Right ventricle myocardium inferior (tissue), 1 donor: ENCODE measurements at regions of chr4 and their contacts with region 1.

Region 1: GRCh38 chr4:155512817-155513216 is 136.1 kb upstream of the MAP9 start:
- DNase-seq: no peak
- ATAC-seq: peak; percentile 69

Region 2: DNA sequence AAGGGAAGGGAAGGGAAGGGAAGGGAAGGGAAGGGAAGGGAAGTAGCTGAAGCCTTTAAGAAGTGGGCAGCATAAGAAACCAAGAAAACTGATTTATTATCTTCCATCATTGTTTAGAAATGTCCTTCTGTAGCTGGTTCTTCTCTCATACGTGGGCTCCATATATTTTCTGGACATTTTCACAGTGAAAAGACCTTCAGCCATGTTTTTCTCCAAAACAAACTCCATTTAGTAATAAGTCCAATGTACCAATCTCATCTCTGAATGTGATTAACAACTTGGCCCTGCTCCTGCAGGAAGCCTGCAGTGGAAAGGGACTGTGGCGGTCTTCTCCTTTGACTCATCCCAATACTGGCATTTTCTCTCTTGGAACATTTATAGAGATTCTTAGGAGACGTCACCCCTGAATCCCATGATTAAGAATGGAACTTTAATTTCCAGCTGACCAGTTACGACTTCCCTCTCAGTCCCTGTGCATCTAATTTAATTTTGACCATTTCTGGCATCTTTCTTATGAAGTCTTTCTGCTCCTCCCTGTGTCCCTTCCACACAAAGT is 57.2 kb after region 1 on chr4:
- intact Hi-C with region 1: loop called (anchors 5 kb)
- DNase-seq: no peak
- ATAC-seq: no peak

Region 3: GRCh38 chr4:155745984-155746383 is 233.2 kb after region 1 on chr4:
- intact Hi-C with region 1: no loop called
- DNase-seq: no peak
- ATAC-seq: peak; percentile 68

Region 4: DNA sequence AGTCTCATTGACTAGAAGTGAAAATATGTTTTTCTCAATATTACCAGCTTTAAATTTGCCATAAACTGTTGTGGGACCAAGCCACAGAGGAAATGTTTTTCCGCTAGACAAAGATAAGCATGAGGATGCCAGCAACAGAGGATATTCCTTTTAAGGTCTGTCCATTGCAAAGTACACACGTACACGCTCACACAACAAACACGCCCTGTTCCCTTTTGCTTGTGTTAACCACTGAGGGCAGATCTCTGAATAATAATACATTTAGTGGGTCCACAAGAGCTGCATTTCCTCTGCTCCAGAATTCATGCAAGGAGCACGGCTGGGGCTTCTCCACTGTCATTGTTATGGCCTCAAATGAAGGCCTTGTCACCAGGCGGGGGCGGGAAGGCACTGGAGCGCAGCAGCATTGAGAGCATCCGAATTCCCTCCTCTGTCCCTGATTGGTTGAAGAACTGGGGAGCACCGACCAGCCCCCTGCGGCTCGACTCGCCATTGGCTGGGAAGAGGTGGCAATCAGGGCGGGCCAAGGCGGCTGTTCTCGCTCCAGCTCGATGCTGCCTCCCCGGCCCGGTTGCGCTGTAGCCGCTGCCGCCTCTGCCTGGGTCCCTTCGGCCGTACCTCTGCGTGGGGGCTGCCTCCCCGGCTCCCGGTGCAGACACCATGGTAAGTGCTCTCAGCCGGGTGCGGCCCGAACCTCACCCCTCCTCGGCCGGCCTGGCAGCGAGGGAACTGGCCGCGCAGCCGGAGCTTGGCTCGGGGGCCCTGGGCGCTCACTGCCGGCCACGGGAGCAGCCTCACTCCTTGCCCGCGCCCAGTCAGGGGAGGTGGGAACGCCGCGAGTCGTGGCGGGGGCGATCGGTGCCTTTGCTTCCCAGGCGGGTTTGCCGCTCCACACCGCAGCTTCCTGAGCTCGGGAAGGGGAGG is 245.9 kb after region 1 on chr4 and contains the start of gene GUCY1B1:
- intact Hi-C with region 1: loop called (anchors 10 kb)
- DNase-seq: peak; percentile 96
- ATAC-seq: peak; percentile 98
- total RNA-seq, gene GUCY1B1: 32.6 TPM